ENCODE measurements at regions of chr2 and their contacts with region 1.

Region 1: GRCh38 chr2:45046786-45047185 is 37.5 kb upstream of the SIX2 start:
- H3K4me3 Mint-ChIP-seq: no peak overlapping the region
- H3K27ac Mint-ChIP-seq: no peak overlapping the region
- H3K4me1 Mint-ChIP-seq: no peaks in the 10 kb centered on the region
- H3K27me3 Mint-ChIP-seq: peaks cover 21% of the 10 kb centered on the region

Region 2: GRCh38 chr2:45089554-45090261 is 42.9 kb after region 1 on chr2:
- intact Hi-C with region 1: loop called (anchors 10 kb)
- H3K4me3 Mint-ChIP-seq: no peak overlapping the region
- H3K27ac Mint-ChIP-seq: no peak overlapping the region
- H3K4me1 Mint-ChIP-seq: no peaks in the 10 kb centered on the region
- H3K27me3 Mint-ChIP-seq: peaks cover 12% of the 10 kb centered on the region

Region 3: DNA sequence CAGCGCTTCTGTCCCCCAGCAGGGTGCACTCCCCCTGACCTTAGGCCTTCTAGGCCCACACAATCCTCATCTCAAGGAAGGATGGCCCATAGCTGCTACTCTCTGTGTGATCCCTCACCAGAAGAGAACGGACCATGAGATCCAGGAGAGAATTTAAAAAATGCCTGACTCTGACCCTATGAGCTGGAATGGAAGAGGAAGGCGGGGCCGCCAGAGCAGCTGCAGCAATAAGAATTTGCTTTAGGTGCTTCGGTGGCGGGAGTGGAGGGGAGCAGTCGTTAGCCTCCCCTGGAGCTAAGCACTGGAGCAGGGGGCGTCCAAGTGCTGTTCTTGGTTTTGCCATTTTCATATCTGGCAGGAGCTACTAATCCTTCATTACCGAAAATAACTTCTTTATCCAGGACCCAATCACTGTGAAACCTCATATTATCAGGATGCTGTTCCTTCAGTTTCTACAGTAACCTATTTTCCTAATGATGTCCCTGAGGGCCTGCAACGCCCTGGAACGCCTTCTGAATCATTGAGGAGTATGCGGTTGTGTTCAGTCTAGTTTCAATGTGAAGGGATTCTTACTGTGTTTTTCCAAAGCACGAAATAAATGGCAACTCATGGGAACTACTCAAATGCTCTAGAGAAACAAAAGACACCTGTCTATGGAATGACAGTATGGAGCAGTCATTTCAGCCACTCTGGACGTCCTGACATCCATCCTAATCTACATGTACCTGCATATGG is 67.6 kb after region 1 on chr2:
- intact Hi-C with region 1: no loop called
- H3K4me3 Mint-ChIP-seq: no peak overlapping the region
- H3K27ac Mint-ChIP-seq: no peak overlapping the region
- H3K4me1 Mint-ChIP-seq: no peaks in the 10 kb centered on the region
- H3K27me3 Mint-ChIP-seq: no peaks in the 10 kb centered on the region

Measured in dendritic cell treated with granulocyte-macrophage colony-stimulating factor and Interleukin-4, amounts not matched to agents 40 ng/mL and 50 ng/mL, for 4 days (primary cell).